Heart left ventricle (tissue), 16 donors: ENCODE measurements at regions of chr1 and their contacts with region 1.

Region 1: DNA sequence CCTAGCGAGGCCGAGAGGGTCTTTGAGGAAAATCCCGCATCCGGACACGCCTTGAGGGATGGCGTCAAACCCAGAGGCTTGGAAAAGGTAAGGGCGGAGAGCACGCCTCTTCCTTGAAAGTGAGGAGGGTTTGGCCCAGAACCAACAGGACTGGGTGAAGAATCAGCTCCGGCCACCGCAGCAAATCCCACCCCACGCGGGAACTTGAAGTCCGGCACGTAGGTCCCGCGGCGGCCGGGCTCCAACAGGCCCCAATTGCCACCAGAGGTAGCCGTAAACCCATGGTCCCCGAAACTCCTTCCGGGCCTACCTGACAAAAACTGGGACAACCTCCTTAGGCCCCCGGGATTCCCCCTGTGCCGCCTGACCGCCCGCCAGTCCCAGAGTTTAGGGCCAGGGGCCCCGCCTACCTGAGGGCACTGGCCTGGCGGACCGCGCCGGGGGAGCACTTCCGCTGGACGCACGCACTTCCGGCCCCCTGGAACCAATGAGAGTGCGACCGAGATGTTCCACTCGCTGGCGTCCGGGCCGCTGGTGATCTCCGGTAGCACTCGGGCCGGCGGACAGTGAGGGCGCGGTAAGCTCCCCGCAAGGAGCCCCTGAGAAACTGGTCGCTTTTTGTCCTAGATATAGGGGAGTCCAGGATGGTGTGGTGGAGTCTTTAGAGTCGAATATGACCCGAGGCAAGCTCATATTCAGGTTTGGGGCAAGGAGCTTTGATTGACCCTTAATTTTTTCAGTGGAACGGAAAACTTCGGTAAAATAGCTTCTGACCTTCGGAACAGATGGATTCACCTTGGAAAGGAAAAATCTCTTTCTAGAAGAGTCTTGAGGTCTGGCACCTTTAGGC is at the starts of genes LZIC and NMNAT1:
- DNase-seq: peak; percentile 93 to 96 (median 94)
- ATAC-seq: peak; percentile 99 to 100 (median 99)
- H3K4me3 ChIP-seq: peak within 1 kb of the TSS; percentile 66 to 96 (median 80)
- H3K27ac ChIP-seq: peak within 1 kb of the TSS; percentile 56 to 94 (median 90)
- H3K4me1 ChIP-seq: peaks cover 4 to 30% (median 17%) of the 10 kb centered on the region in 12 donors
- H3K27me3 ChIP-seq: no peaks in the 10 kb centered on the region
- CTCF ChIP-seq: peak in 2 of 12 donors; percentile 3 to 8
- POLR2A ChIP-seq: peak; percentile 17 to 92
- total RNA-seq, gene LZIC: 30.8 to 37.7 (median 34.9) TPM
- total RNA-seq, gene NMNAT1: 11.0 to 24.2 (median 17.2) TPM

Region 2: GRCh38 chr1:9823943-9824701 is 119.0 kb before region 1 on chr1 and contains the start of gene CLSTN1:
- intact Hi-C with region 1: no loop called
- DNase-seq: peak; percentile 91 to 96 (median 92)
- ATAC-seq: peak; percentile 63 to 91 (median 84)
- H3K4me3 ChIP-seq: peak within 1 kb of the TSS; percentile 62 to 98 (median 88)
- H3K27ac ChIP-seq: peak within 1 kb of the TSS; percentile 63 to 93 (median 88)
- H3K4me1 ChIP-seq: peaks cover 12 to 43% (median 35%) of the 10 kb centered on the region in 12 donors
- H3K27me3 ChIP-seq: no peaks in the 10 kb centered on the region
- CTCF ChIP-seq: no peak
- POLR2A ChIP-seq: peak in 1 of 2 donors; percentile 31
- total RNA-seq, gene CLSTN1: 50.6 to 79.4 (median 64.3) TPM

Region 3: DNA sequence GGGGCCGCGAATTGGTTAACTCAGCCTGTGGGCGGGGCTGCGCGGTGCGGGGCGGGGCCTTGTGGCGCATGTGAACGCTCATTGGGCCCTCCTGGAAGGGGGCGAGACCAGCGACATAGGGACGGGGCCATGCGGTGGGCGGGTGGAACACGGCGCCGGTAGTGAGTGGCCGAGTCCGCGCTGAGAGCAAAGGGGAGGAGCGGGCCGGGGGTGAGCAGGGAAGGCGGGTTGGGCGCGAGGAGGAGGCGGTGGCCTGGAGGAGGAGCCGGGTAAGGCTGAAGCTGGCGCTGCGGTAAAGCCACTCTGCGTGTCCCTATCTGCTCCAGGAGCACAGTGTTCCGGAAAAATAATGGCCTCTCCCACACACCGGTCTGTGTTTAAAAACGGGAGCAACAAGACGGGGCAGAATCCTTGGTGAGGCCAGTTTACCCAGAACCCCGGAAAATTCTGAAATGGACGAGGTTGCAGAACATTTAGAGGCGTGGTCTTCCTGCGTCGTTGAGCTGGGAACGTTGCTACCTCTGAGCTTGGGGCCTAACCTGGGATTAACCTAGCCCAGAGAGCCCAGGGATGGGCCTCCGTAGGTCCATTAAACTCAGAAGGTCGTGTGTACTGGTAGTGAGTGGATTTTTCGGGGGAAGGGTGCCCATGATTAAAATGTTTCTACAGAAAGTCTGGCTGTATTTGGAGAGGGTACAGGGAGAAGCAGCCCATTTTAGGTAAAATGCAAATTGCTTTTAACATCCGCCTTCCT is 32.6 kb before region 1 on chr1:
- intact Hi-C with region 1: loop called in 1 of 10 experiments (anchors 2 kb)
- DNase-seq: peak; percentile 100
- ATAC-seq: peak; percentile 97 to 99 (median 98)
- H3K4me3 ChIP-seq: peak overlapping the region in 11 of 12 donors; percentile 47 to 85 (median 62)
- H3K27ac ChIP-seq: peak overlapping the region; percentile 86 to 98 (median 92)
- H3K4me1 ChIP-seq: peaks cover 0 to 56% (median 27%) of the 10 kb centered on the region in 12 donors
- H3K27me3 ChIP-seq: no peaks in the 10 kb centered on the region
- CTCF ChIP-seq: no peak
- POLR2A ChIP-seq: peak in 1 of 2 donors; percentile 90

Region 4: DNA sequence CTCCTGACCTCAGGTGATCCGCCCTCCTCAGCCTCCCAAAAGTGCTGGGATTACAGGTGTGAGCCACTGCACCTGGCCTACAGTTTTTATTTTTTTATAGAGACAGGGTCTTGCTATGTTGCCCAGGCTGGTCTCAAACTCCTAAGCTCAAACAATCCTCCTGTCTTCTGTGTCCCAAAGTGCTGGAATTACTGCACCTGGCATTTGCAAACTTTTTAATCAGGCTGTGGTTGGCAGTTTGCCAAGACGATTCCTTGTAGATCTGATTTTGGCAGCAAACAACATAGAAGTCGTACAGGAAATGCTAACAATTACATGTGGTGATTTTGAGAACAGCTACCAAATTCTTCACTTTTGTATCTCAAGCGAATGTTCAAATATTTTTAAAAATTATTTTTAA is 64.0 kb after region 1 on chr1:
- intact Hi-C with region 1: loop called in 1 of 10 experiments (anchors 10 kb)
- DNase-seq: peak in 2 of 5 donors; percentile 24 to 25
- ATAC-seq: no peak
- H3K4me3 ChIP-seq: no peak overlapping the region
- H3K27ac ChIP-seq: peak overlapping the region in 2 of 12 donors; percentile 10 to 27
- H3K4me1 ChIP-seq: peaks cover 0 to 10% (median 2%) of the 10 kb centered on the region in 12 donors
- H3K27me3 ChIP-seq: no peaks in the 10 kb centered on the region
- CTCF ChIP-seq: no peak
- POLR2A ChIP-seq: no peak

Region 5: DNA sequence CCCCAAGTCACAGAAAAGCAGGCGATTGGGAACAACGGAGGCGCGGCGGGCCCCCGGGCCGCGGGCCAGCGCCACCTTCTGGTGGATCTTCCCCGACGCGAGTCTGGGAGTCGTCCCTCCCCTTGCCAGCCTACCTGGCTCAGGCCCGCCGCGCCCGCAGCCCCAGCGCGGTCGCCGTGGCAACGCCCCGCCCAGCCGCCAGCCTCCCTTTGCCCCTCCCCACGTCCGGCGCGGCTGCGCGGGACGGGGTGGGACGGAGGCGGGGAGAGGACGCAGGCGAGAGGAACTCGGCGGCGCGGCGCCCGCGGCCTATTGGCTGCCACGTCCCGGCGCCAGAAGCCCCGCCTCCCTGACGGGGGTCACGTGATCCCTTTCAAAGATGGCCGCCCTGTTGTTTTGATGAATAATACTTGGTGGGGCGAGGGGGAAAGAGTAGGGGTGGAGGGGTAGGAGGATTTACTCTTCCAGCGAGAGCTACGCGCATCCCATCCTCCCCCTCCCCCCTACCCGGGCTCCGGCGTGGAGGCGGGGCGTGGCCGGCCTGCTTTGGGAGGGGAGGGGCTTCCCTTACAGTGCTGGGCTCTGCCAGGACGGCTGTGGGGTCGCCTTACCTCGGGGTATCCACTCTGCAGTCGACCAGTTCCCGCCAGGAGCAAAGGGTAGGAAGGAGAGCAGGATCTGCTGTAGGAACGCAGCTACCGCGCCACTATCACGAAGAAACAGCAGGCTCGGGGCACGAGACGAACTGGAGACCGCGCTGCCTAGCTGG is 89.6 kb after region 1 on chr1 and contains the start of gene UBE4B:
- intact Hi-C with region 1: loop called in 5 of 10 experiments (anchors 1 to 5 kb)
- DNase-seq: peak; percentile 97 to 99 (median 98)
- ATAC-seq: peak; percentile 99 to 100 (median 99)
- H3K4me3 ChIP-seq: peak within 1 kb of the TSS; percentile 73 to 100 (median 90)
- H3K27ac ChIP-seq: peak within 1 kb of the TSS; percentile 65 to 99 (median 95)
- H3K4me1 ChIP-seq: peaks cover 0 to 38% (median 19%) of the 10 kb centered on the region in 12 donors
- H3K27me3 ChIP-seq: no peaks in the 10 kb centered on the region
- CTCF ChIP-seq: peak; percentile 73 to 95 (median 90)
- POLR2A ChIP-seq: peak in 1 of 2 donors; percentile 34
- total RNA-seq, gene UBE4B: 50.4 to 132 (median 68.2) TPM

Region 6: GRCh38 chr1:10338047-10338446 is 394.9 kb after region 1 on chr1:
- intact Hi-C with region 1: loop called in 1 of 10 experiments (anchors 5 kb)
- DNase-seq: peak in 4 of 5 donors; percentile 33 to 54 (median 43)
- ATAC-seq: peak; percentile 83 to 91 (median 86)
- H3K4me3 ChIP-seq: no peak overlapping the region
- H3K27ac ChIP-seq: peak overlapping the region in 2 of 12 donors; percentile 36 to 48
- H3K4me1 ChIP-seq: peaks cover 0 to 25% (median 12%) of the 10 kb centered on the region in 12 donors
- H3K27me3 ChIP-seq: no peaks in the 10 kb centered on the region
- CTCF ChIP-seq: peak; percentile 48 to 78 (median 72)
- POLR2A ChIP-seq: no peak